Aorta (tissue), 5 donors: ENCODE measurements at regions of chr6 and their contacts with region 1.

Region 1: DNA sequence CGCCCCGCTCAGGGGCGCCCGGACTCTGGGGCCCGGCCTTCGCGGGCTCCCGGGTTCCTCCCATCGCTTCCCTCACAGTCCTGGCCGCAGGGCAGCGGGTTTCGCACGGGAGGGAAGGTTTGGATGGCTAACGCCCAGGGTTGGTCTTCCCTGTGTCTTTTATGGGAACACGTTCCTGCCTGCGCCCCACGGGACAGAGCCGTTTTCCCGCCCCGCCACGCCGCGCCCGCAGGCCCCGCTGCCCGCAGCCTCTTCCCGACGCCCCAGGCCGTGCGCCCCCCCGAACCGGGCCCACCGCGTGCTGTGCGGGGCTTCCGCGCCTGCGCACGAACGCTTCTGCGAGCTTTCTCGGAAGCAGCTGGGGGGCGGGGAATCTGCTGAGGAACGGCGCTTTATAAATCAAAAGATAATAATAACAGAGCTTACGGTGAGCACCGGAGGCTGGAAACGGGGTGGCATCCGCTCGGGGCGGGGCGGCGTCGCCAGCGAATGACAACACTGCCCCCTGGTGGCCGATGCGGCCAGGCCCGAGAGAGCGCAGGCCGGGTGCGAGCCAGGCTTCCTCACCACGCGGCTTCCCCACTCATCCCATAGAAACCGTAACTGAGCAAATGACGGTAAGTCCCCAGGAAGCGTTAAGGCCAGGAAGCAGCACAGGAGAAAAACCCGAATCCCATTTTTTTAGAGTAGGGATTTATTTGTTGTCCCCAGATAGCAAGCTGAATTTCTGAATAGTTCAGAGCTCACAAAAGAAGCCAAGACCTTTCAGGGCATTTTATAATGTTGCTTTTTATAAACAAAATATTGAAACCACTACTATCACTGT is 116.4 kb downstream of the MYLK4 start:
- DNase-seq: peak; percentile 94 to 98
- ATAC-seq: peak; percentile 96
- H3K4me3 ChIP-seq: no peak overlapping the region
- H3K27ac ChIP-seq: peak overlapping the region; percentile 97 to 100
- H3K4me1 ChIP-seq: peaks cover 6 to 11% of the 10 kb centered on the region in 2 donors
- H3K27me3 ChIP-seq: no peaks in the 10 kb centered on the region

Region 2: GRCh38 chr6:1604158-1605030 is 1030.0 kb before region 1 on chr6:
- intact Hi-C with region 1: loop called (anchors 2 kb)
- DNase-seq: peak; percentile 82 to 95
- ATAC-seq: peak; percentile 89
- H3K4me3 ChIP-seq: peak overlapping the region; percentile 48 to 55
- H3K27ac ChIP-seq: peak overlapping the region; percentile 94 to 100
- H3K4me1 ChIP-seq: no peaks in the 10 kb centered on the region
- H3K27me3 ChIP-seq: no peaks in the 10 kb centered on the region

Region 3: DNA sequence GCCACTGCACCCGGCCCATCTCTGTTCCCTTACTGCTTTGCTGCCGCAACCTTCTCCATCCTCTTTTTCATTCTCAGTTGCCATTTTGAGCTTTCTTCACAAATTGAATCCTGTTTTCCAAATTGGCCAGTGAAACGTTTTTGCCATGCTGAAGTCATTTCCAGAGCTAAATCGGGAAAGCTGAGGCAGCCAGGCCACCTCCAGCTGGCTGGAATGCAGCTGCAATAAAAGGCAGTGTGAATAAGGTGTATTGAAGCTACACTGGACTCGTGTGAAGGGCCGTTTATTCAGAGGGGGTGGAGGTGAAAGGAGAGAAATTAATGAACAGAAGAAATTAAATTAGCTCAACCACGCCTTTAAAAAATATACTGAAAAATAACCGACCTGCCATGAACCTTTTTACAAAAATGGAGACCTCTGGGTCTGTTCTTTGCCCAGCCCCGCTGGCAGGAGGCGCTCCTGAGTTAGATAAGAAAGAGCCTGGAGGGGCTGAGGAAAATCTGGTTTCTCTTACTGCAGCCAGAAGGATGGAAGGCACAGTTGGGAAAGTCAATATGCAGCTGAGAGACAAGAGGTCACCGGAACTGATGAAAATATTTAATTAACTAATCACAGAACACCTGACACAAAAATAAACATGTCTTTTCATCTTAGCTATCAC is 740.8 kb before region 1 on chr6:
- intact Hi-C with region 1: loop called in 1 of 2 experiments (anchors 10 kb)
- DNase-seq: no peak
- ATAC-seq: peak; percentile 51
- H3K4me3 ChIP-seq: no peak overlapping the region
- H3K27ac ChIP-seq: peak overlapping the region; percentile 93 to 94
- H3K4me1 ChIP-seq: peaks cover 0 to 10% of the 10 kb centered on the region in 2 donors
- H3K27me3 ChIP-seq: no peaks in the 10 kb centered on the region

Region 4: DNA sequence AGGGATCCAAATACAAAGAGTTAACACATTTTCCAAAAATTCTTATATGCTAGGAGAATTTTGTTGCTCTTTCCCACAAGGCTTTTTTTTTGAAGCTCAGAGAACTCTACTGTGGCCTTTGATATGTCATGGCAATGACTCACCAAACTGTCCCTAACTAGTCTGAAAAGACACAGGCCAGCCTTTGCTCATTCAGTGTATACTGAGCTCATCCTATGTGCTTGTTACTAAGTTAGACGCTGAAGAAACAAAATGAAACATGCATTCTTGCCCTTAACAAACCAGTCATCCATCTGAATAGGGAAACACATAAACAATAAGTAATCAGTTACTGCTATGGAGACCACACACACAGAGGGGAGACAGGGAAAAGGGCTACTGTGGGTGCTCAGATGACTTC is 732.8 kb before region 1 on chr6:
- intact Hi-C with region 1: loop called (anchors 5 to 10 kb)
- DNase-seq: no peak
- ATAC-seq: no peak
- H3K4me3 ChIP-seq: no peak overlapping the region
- H3K27ac ChIP-seq: peak overlapping the region; percentile 16 to 53
- H3K4me1 ChIP-seq: peaks cover 6 to 9% of the 10 kb centered on the region in 2 donors
- H3K27me3 ChIP-seq: no peaks in the 10 kb centered on the region

Region 5: GRCh38 chr6:2103644-2104523 is 530.5 kb before region 1 on chr6:
- intact Hi-C with region 1: loop called in 1 of 2 experiments (anchors 5 kb)
- DNase-seq: peak in 1 of 2 donors; percentile 63
- ATAC-seq: peak; percentile 87
- H3K4me3 ChIP-seq: peak overlapping the region; percentile 61 to 94
- H3K27ac ChIP-seq: peak overlapping the region; percentile 84 to 90
- H3K4me1 ChIP-seq: no peaks in the 10 kb centered on the region
- H3K27me3 ChIP-seq: no peaks in the 10 kb centered on the region

Region 6: GRCh38 chr6:2353412-2354137 is 280.8 kb before region 1 on chr6:
- intact Hi-C with region 1: loop called (anchors 5 kb)
- DNase-seq: peak; percentile 66 to 83
- ATAC-seq: peak; percentile 89
- H3K4me3 ChIP-seq: no peak overlapping the region
- H3K27ac ChIP-seq: peak overlapping the region; percentile 61 to 93
- H3K4me1 ChIP-seq: peaks cover 0 to 6% of the 10 kb centered on the region in 2 donors
- H3K27me3 ChIP-seq: no peaks in the 10 kb centered on the region

Region 7: DNA sequence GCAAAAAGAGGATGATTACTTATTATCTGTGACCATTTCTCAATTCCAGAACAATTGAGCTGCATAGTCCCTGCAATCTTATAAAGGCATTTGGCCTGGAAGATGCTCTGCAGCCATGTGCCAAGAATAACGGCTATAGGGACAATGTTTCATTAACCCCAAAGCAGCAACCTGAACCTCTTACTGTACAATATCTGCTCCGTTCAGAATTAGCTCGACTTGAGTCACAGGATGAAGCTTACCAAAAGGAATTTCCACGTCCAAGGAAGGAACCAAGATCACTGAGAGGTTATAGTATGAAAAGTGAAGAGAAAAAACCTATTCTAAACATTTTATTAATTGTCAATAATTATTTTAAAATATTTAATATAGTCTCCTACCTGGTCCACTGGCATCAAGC is 221.6 kb before region 1 on chr6:
- intact Hi-C with region 1: no loop called
- DNase-seq: no peak
- ATAC-seq: no peak
- H3K4me3 ChIP-seq: no peak overlapping the region
- H3K27ac ChIP-seq: no peak overlapping the region
- H3K4me1 ChIP-seq: no peaks in the 10 kb centered on the region
- H3K27me3 ChIP-seq: no peaks in the 10 kb centered on the region

Region 8: GRCh38 chr6:2434116-2434515 is 200.2 kb before region 1 on chr6:
- intact Hi-C with region 1: no loop called
- DNase-seq: no peak
- ATAC-seq: no peak
- H3K4me3 ChIP-seq: no peak overlapping the region
- H3K27ac ChIP-seq: no peak overlapping the region
- H3K4me1 ChIP-seq: no peaks in the 10 kb centered on the region
- H3K27me3 ChIP-seq: no peaks in the 10 kb centered on the region

Region 9: GRCh38 chr6:2448820-2449571 is 185.4 kb before region 1 on chr6:
- intact Hi-C with region 1: loop called in 1 of 2 experiments (anchors 5 kb)
- DNase-seq: no peak
- ATAC-seq: peak; percentile 86
- H3K4me3 ChIP-seq: peak overlapping the region in 1 of 2 donors; percentile 23
- H3K27ac ChIP-seq: peak overlapping the region in 1 of 2 donors; percentile 45
- H3K4me1 ChIP-seq: peaks cover 0 to 3% of the 10 kb centered on the region in 2 donors
- H3K27me3 ChIP-seq: no peaks in the 10 kb centered on the region